ENCODE measurements at regions of chr12 and their contacts with region 1.

Region 1: DNA sequence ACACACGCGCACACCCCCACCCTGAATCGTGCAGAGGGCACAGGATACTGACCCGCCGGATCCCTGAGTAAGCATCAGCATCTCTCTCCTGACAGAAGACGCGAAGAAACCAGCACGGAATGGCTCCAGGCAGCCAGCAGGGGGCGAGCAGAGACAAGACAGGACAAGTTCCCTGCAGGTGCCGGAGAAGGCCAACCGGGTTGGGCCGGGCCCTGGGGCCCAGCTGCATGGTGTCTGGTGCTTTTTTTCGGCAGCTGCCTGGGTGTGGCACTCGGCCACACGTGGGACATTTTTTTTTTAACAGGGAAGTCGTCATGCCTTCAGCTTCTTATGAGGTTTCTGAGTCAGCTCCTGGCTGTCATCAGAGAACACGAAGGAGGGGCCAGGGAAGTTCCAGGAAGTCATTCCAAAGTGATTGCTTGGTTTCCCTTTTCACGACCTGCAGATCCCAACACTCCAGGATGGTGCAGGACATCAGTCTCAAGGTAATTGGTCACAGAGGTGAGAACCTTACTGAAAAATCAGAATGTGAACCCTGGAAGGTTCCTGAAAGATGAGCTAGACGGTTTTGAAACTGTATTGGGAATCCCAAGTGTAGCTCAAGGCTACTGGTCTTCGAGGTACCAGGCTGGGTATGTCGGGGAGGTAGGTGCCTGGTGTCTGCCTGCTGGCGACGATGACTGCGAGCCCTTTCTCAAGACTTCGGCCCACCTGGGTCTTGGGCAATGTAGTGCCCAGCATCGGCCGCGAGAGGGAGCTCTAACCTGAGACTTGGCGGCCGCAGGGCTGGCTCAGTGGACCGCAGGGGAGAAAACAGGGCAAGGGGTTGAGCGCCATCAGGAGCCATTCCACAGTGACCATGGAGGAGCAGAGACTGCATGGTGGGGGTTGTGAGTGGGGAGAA is 190.8 kb upstream of the PRMT8 start:
- DNase-seq: peak; percentile 95
- H3K4me3 ChIP-seq: peak overlapping the region in 2 of 8 donors; percentile 20 to 53
- H3K27ac ChIP-seq: no peak overlapping the region
- H3K4me1 ChIP-seq: peaks cover 8 to 13% (median 12%) of the 10 kb centered on the region in 6 donors
- H3K27me3 ChIP-seq: peaks cover 0 to 48% (median 7%) of the 10 kb centered on the region in 7 donors
- CTCF ChIP-seq: peak; percentile 83 to 96 (median 92)
- POLR2A ChIP-seq: no peak

Region 2: DNA sequence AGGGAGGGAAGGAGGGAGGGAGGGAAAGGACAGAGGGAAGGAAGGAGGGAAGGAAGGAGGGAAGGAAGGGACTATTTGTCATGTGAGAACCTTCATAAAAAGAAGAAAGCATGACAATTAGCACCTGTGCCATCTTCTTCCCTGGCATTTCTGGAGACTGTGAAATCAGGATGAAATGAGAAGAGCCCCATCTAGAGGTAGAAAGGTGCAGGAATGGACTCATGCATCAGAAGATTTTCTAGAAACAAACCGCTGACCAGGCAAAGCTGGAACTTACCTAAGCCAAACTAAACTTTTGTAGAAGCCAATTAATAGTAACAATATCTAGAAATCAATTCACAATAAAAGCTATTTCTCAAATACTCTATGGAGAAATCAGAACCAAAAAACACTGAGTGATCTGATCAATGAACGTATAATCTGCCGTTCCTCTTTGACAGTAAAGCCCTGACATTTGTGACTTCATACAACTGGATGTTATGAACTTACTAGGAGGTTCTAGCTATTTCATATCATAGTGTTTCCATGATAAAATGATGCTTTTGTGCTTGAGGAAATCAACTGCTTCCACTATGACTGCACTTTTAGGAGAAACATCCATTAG is 477.1 kb after region 1 on chr12:
- intact Hi-C with region 1: loop called (anchors 10 kb)
- DNase-seq: no peak
- H3K4me3 ChIP-seq: no peak overlapping the region
- H3K27ac ChIP-seq: no peak overlapping the region
- H3K4me1 ChIP-seq: no peaks in the 10 kb centered on the region
- H3K27me3 ChIP-seq: no peaks in the 10 kb centered on the region
- CTCF ChIP-seq: peak; percentile 29 to 75 (median 65)
- POLR2A ChIP-seq: no peak

Region 3: DNA sequence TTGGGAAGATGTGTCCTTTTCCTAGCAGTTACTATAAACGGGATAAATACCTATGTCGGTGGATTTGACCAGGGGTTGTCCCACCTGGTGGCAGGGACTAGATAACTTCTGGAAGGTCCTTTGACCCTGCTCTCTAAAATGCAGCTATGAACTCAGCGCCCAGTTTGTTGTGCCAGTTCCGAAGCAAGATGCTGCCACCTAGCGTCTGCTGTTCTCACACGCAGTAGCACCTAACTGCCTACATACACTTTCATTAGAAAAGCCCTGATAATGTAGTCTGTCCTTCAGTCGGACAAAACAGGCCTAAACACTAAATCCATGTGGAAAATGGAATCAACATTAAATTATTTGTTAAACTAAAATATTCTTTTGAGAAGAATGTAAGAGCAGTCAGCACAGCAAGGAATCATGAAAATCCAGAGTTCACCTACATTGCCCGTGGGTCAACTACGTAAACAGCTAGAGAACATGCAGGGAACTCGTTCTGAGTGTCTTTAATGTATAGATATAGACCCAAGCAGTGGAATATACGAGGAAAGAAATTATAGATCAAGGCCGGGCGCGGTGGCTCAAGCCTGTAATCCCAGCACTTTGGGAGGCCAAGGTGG is 503.8 kb after region 1 on chr12:
- intact Hi-C with region 1: loop called (anchors 5 kb)
- DNase-seq: peak; percentile 84
- H3K4me3 ChIP-seq: no peak overlapping the region
- H3K27ac ChIP-seq: no peak overlapping the region
- H3K4me1 ChIP-seq: no peaks in the 10 kb centered on the region
- H3K27me3 ChIP-seq: no peaks in the 10 kb centered on the region
- CTCF ChIP-seq: peak; percentile 46 to 92 (median 81)
- POLR2A ChIP-seq: no peak